ENCODE measurements at regions of chr9 and their contacts with region 1.

Region 1: GRCh38 chr9:94668418-94668932 is 29.2 kb upstream of the FBP1 start:
- DNase-seq: no peak
- H3K4me3 Mint-ChIP-seq: peak overlapping the region; percentile 78
- H3K27ac Mint-ChIP-seq: peak overlapping the region; percentile 69
- H3K4me1 Mint-ChIP-seq: peaks cover 21% of the 10 kb centered on the region
- H3K27me3 Mint-ChIP-seq: no peaks in the 10 kb centered on the region
- CTCF ChIP-seq: no peak

Region 2: DNA sequence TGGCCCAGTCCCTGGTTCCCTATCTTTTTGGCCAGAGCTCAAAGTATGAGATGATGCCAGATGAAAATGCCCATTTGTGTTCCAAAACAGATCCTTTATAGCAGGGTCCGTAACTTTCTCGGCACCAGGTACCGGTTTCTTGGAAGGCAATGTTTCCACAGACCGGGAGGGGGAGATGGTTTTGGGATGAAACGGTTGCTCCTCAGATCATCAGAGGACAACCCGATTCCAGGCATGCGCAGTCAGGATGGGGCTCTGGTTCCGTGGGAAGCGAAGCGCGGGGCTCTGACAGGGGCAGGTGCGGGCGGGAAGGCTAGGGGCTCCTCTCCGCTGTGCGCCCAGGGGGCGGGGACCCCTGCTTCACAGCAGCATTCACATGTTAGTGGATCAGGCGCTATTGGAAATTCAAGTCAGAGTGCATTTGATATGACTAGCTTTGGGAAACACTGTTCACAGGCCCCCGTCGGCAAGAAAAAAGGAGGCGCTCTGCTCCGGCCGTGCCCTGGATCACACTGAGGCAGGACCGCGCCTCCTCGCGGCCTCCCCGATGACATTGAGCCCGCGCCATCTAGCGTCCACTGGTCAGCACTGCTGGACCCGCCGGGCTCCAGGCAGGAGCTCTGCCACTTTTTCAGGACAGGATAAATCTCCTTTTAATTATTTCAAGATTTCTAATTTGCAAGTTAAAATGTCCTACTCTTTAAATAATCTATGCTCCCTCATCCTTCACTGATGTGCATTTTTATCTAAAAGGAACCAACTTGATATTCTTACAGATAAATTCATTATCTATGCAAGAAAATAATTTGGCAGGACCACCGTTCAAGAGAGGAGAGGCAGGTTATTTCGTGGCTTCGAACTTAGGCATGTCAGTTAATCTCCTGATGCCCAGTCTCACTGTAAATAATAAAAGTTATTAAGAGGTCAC is 459.0 kb after region 1 on chr9:
- CTCF ChIA-PET with region 1: interaction called, 12 read pairs
- intact Hi-C with region 1: loop called (anchors 5 kb)
- DNase-seq: peak; percentile 80
- H3K4me3 Mint-ChIP-seq: no peak overlapping the region
- H3K27ac Mint-ChIP-seq: no peak overlapping the region
- H3K4me1 Mint-ChIP-seq: peaks cover 19% of the 10 kb centered on the region
- H3K27me3 Mint-ChIP-seq: no peaks in the 10 kb centered on the region
- CTCF ChIP-seq: peak; percentile 79

Region 3: GRCh38 chr9:95167998-95168397 is 499.5 kb after region 1 on chr9:
- CTCF ChIA-PET with region 1: interaction called, 12 read pairs
- intact Hi-C with region 1: no loop called
- DNase-seq: peak; percentile 71
- H3K4me3 Mint-ChIP-seq: no peak overlapping the region
- H3K27ac Mint-ChIP-seq: no peak overlapping the region
- H3K4me1 Mint-ChIP-seq: peaks cover 12% of the 10 kb centered on the region
- H3K27me3 Mint-ChIP-seq: no peaks in the 10 kb centered on the region
- CTCF ChIP-seq: peak; percentile 81

Measured in Calu3 (cell line).